Esophagus muscularis mucosa (tissue), 4 donors: ENCODE measurements at regions of chr10 and their contacts with region 1.

Region 1: DNA sequence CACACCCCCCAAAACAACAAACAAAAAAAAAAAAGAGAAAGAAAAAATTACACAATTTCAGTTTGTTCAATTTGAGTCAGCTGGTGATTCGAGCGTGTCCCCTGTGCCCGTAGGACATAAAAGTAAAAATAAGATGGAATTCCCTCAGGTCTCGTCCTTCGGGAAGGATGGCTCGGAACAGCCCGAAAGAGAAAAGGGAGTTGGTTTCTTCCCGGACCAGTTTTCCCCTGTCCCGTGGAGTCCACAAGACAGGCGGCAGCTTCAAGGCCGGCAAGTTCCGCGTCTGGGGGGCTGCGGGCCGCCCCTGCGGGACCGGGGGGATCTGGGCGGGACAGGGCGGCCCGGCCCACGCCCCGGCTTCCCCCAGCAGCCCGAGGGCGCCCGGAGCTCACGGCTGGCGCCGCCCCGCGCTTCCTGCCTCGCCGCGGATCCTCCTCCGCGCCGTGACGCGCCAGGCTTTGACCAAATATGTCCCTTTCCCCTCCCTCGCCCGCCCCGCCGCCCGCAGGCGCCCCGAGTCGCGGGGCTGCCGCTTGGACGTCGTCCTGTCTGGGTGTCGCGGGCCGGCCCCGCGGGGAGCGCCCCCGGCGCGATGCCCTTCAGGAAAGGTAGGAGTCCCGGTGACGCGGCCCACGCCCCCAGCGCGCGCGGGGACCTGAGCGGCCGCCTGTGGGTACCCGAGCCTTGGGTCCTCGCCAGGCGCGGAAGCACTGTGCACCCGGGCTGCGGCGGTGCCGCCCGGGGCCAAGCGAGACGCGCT is 55.8 kb downstream of the RBM17 start:
- DNase-seq: peak; percentile 96
- H3K4me3 ChIP-seq: peak overlapping the region; percentile 75 to 82 (median 80)
- H3K27ac ChIP-seq: peak overlapping the region; percentile 85 to 91 (median 88)
- H3K4me1 ChIP-seq: peaks cover 8 to 35% (median 28%) of the 10 kb centered on the region in 4 donors
- H3K27me3 ChIP-seq: peaks cover 0 to 13% (median 0%) of the 10 kb centered on the region in 4 donors
- CTCF ChIP-seq: peak in 2 of 3 experiments; percentile 35 to 46
- EP300 ChIP-seq: no peak
- POLR2A ChIP-seq: peak; percentile 68

Region 2: DNA sequence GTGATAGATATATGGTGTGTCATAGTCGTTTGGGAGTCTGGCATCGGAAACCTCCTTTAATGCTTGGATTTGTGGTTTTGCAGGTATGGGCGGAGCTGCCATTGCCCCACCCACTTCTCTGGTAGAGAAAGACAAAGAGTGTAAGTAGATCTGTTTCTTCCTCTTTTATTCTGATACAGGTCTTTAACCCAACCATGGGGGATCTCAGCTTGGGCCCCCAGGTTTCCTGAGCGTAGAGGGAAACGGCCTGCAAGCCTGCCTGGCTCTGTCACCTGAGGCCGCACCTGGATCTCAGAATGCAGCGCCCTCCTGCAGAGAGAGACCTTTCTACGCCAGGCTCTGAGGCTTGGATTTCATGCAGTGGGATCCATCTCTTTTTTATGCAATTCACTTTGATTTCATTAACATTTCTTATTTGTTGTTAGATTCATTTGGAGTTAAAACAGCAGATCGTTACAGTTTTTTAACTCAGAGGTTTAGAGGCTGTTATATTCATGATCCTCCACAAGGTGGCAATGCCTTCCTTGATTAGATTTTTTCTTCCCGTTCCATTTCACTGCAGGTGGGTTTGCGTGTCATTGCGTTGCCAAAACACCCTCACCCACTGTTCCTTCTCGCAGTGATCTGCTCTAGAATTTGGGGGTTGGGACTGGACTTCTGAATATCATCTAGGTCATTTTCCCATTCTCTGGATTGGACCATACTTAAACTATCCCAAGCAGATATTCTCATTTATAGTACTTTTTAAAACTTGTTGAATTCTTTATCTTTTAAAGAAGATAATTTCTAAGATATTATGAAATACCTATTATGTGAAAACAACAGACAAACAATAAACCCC is 35.8 kb before region 1 on chr10:
- intact Hi-C with region 1: loop called (anchors 5 kb)
- DNase-seq: no peak
- H3K4me3 ChIP-seq: no peak overlapping the region
- H3K27ac ChIP-seq: no peak overlapping the region
- H3K4me1 ChIP-seq: peaks cover 0 to 7% (median 5%) of the 10 kb centered on the region in 4 donors
- H3K27me3 ChIP-seq: no peaks in the 10 kb centered on the region
- CTCF ChIP-seq: peak; percentile 64 to 80 (median 74)
- EP300 ChIP-seq: no peak
- POLR2A ChIP-seq: no peak

Region 3: GRCh38 chr10:6211671-6212635 is 67.4 kb after region 1 on chr10:
- intact Hi-C with region 1: no loop called
- DNase-seq: no peak
- H3K4me3 ChIP-seq: peak overlapping the region; percentile 14 to 38 (median 24)
- H3K27ac ChIP-seq: peak overlapping the region; percentile 68 to 75 (median 71)
- H3K4me1 ChIP-seq: peaks cover 19 to 34% (median 27%) of the 10 kb centered on the region in 4 donors
- H3K27me3 ChIP-seq: no peaks in the 10 kb centered on the region
- CTCF ChIP-seq: no peak
- EP300 ChIP-seq: no peak
- POLR2A ChIP-seq: no peak

Region 4: DNA sequence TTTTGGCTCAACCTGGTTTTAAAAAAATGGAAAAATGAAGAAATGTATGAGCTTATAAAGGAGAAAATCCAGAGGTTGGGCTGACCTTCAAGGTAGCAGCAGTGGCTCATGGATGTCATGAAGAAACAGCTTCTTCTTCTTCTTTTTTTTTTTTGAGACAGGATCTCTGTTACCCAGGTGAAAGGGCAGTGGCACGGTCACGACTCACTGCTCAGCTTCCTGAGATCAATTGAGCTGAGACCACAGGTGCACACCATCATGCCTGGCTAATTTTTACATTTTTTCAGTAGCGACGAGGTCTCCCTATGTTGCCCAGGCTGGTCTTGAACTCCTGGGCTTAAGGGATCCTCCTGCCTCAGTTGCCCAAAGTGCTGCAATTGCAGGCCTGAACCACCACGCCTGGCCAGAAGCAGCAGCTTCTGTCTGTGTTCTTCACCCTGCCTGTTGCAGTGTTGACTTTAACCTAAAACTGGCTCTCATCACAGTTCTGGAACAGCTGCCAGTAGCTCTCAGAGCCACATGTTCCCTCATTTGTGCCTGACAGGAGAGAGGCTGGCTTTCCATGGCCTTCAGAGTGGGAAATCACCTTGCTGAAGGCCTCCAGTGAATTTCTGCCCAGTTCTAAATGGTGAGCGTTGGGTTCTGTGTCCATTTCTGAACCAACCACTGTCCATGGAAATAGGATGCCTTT is 175.9 kb after region 1 on chr10:
- intact Hi-C with region 1: no loop called
- DNase-seq: no peak
- H3K4me3 ChIP-seq: no peak overlapping the region
- H3K27ac ChIP-seq: no peak overlapping the region
- H3K4me1 ChIP-seq: no peaks in the 10 kb centered on the region
- H3K27me3 ChIP-seq: no peaks in the 10 kb centered on the region
- CTCF ChIP-seq: no peak
- EP300 ChIP-seq: no peak
- POLR2A ChIP-seq: no peak